ENCODE measurements at regions of chr12 and their contacts with region 1.

Region 1: DNA sequence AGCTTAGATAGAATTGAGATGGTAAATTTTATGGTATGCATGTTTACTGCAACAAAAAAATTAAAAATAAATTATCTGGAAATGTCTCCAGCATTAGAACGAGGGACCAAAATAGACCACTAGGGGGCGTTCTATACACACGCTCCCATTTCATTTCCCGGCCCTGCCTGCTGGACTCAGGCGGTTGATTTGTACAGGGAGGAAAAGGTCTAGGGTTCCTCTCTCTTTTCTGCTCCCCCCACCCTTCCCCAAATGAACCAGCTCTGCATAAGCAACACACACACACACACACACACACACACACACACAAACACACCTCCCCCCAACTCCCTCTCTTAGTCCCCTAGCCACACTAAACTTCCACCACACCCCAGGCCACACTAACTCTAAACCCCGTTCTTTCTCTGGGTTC is 7.8 kb upstream of the DTX1 start:
- DNase-seq: peak; percentile 71
- H3K4me3 Mint-ChIP-seq: no peak overlapping the region
- H3K27ac Mint-ChIP-seq: no peak overlapping the region
- H3K4me1 Mint-ChIP-seq: no peaks in the 10 kb centered on the region
- H3K27me3 Mint-ChIP-seq: peaks cover 21% of the 10 kb centered on the region
- CTCF ChIP-seq: peak; percentile 56

Region 2: DNA sequence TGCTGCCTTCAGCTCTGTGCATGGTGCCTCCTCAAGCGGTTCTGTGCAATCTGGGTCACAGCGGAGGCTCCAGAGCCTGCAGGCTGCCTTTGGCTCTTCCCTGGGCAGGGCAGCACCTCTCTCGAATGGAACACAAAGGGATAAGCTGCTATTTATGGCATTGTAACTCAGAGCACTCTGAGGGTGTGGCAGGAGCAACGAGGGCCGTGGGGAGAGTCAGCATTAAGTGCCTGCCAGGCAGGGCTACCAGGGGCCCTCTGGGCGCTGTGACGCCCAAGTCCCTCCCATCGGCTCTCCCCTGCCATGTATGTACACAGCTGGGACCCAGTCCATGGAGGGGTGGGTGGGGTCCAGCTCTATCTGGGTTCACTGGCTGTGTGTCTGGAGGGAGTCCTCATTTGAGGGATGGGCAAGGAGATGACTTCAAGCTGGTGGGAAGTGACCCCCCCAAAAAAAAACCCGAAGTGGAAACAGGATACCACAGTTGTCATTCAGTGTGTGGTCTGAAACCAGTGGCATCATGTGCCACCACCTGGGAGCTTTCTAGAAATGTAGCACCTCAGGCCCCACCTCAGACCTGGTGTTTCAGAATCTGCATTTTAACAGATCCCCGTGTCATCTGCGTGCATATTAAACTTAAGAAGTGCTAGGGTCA is 186.0 kb before region 1 on chr12:
- CTCF ChIA-PET with region 1: interaction called, 10 read pairs
- POLR2A ChIA-PET with region 1: no interaction called
- intact Hi-C with region 1: no loop called
- DNase-seq: no peak
- H3K4me3 Mint-ChIP-seq: no peak overlapping the region
- H3K27ac Mint-ChIP-seq: no peak overlapping the region
- H3K4me1 Mint-ChIP-seq: no peaks in the 10 kb centered on the region
- H3K27me3 Mint-ChIP-seq: peaks cover 67% of the 10 kb centered on the region
- CTCF ChIP-seq: no peak

Region 3: GRCh38 chr12:113065126-113066007 is 16.6 kb after region 1 on chr12:
- CTCF ChIA-PET with region 1: interaction called, 21 read pairs
- POLR2A ChIA-PET with region 1: no interaction called
- intact Hi-C with region 1: no loop called
- DNase-seq: no peak
- H3K4me3 Mint-ChIP-seq: no peak overlapping the region
- H3K27ac Mint-ChIP-seq: no peak overlapping the region
- H3K4me1 Mint-ChIP-seq: no peaks in the 10 kb centered on the region
- H3K27me3 Mint-ChIP-seq: peaks cover 13% of the 10 kb centered on the region
- CTCF ChIP-seq: no peak

Region 4: GRCh38 chr12:113135178-113136127 is 86.7 kb after region 1 on chr12 and contains the start of gene RASAL1:
- CTCF ChIA-PET with region 1: interaction called, 12 read pairs
- POLR2A ChIA-PET with region 1: no interaction called
- intact Hi-C with region 1: no loop called
- DNase-seq: peak; percentile 52
- H3K4me3 Mint-ChIP-seq: peak within 1 kb of the TSS; percentile 55
- H3K27ac Mint-ChIP-seq: no peak within 1 kb of the TSS
- H3K4me1 Mint-ChIP-seq: peaks cover 5% of the 10 kb centered on the region
- H3K27me3 Mint-ChIP-seq: no peaks in the 10 kb centered on the region
- CTCF ChIP-seq: peak; percentile 47
- total RNA-seq, gene RASAL1: not detected in 2 replicates

Region 5: DNA sequence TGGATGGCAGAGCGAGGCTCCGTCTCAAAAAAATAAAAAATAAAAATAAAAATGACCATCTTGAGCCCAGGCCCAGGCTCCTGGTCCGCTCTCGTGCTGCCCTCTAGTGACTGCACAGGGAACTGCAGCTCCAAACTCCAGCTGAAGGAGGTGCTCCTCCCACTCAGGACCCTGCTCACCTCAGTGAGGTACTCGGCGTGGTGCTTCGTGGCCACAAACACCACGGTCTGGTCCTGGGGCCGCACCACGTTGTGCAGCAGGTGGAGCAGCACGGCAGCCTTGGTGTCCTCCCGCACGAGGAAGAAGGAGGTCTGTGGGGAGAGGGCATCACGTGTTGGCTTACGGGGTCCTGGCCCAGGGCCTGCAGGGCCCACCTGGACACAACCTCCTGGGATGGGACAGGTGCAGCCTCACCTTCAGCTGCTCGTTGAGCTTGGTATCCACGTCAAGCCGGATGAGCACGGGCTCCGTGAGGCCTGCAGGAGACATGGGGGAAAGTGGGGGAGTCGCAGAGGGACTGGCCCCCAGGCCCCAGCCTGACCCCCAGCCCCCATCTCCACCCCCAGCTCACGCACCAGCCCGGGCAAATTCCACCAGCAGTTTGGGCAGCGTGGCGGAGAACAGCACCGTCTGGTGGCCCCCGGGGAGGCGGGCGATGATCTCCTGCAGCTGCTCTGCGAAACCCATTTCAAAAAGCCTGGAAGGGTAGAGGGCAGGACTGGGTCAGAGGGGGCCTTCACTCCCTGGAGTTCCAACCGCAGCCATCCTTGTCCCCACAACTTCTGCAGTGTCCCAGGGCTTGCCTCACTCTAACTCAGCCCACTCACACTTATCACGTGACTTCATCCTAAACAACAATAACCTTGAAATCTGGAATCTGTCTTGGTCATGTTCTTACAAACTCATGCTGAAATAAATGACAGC is 126.0 kb after region 1 on chr12:
- CTCF ChIA-PET with region 1: interaction called, 131 read pairs
- POLR2A ChIA-PET with region 1: no interaction called
- intact Hi-C with region 1: loop called (anchors 1 kb)
- DNase-seq: peak; percentile 67
- H3K4me3 Mint-ChIP-seq: no peak overlapping the region
- H3K27ac Mint-ChIP-seq: peak overlapping the region; percentile 14
- H3K4me1 Mint-ChIP-seq: peaks cover 5% of the 10 kb centered on the region
- H3K27me3 Mint-ChIP-seq: no peaks in the 10 kb centered on the region
- CTCF ChIP-seq: peak; percentile 96

Measured in MCF 10A (cell line).